ENCODE measurements at regions of chr19 and their contacts with region 1.

Region 1: DNA sequence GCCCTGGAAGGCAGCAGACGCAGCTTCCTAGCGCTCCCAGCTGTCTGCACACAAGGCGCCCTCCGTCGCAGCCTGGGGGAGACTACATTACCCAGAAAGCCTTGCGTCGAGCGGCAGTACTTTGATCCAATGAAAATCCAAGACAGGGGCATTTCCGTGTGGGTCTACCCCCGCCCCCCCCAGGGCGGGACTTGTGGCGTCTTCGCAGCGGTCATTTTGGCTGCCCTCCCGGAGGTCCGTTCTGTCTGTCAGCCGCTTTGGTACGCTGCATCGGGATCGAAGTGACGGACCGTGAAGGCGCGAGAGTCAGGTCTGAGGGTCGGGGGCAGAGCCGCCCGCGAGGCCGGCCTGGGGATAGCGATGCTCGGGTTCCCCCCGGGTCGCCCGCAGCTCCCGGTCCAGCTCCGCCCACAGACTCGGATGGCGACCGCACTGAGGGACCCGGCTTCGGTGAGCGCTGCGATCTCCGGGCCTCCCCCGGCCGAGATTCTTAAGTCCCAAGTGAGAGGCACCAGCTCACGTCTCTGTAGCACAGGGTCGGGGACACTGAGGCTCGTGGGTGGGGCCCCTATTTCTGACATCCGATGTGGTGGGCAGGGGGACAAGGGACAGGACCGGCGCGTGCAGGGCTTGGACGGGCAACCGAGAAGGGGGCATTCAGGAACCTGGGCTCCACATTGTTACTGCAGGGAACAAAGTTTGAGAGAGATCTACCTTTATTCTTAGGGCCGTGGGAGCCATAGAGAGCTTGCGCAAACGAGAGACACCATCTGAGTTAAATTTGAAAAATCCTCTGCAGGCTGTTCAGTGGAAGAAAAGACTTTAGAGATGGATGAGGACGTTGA is at the start of gene ZNF211:
- DNase-seq: peak; percentile 93
- ATAC-seq: peak; percentile 100
- H3K4me3 ChIP-seq: peak within 1 kb of the TSS; percentile 83
- H3K27ac ChIP-seq: peak within 1 kb of the TSS; percentile 78
- H3K4me1 ChIP-seq: peaks cover 4% of the 10 kb centered on the region
- H3K27me3 ChIP-seq: no peaks in the 10 kb centered on the region
- CTCF ChIP-seq: 0 out of 2 replicates have a peak, but pooled peaks have one; percentile 2
- POLR2A ChIP-seq: no peak
- RAD21 ChIP-seq: no peak
- total RNA-seq, gene ZNF211: 9.2 and 13.1 TPM in 2 replicates

Region 2: GRCh38 chr19:57578487-57579205 is 54.6 kb before region 1 on chr19 and contains the start of gene ZNF416:
- CTCF ChIA-PET with region 1: no interaction called
- POLR2A ChIA-PET with region 1: no interaction called
- dilution Hi-C with region 1: no loop called
- in situ Hi-C with region 1: no loop called
- intact Hi-C with region 1: loop called (anchors 2 kb)
- DNase-seq: peak; percentile 99
- ATAC-seq: peak; percentile 95
- H3K4me3 ChIP-seq: peak within 1 kb of the TSS; percentile 66
- H3K27ac ChIP-seq: peak within 1 kb of the TSS; percentile 21
- H3K4me1 ChIP-seq: peaks cover 2% of the 10 kb centered on the region; the same call in 1 of the 2 replicates
- H3K27me3 ChIP-seq: no peaks in the 10 kb centered on the region
- CTCF ChIP-seq: peak; percentile 39
- POLR2A ChIP-seq: no peak
- RAD21 ChIP-seq: no peak
- total RNA-seq, gene ZNF416: 6.1 and 8.1 TPM in 2 replicates

Region 3: GRCh38 chr19:57671114-57671878 is 38.1 kb after region 1 on chr19:
- CTCF ChIA-PET with region 1: no interaction called
- POLR2A ChIA-PET with region 1: no interaction called
- dilution Hi-C with region 1: no loop called
- in situ Hi-C with region 1: no loop called
- intact Hi-C with region 1: no loop called
- DNase-seq: no peak
- ATAC-seq: no peak
- H3K4me3 ChIP-seq: no peak overlapping the region
- H3K27ac ChIP-seq: no peak overlapping the region
- H3K4me1 ChIP-seq: no peaks in the 10 kb centered on the region
- H3K27me3 ChIP-seq: no peaks in the 10 kb centered on the region; the same call in 1 of the 2 replicates
- CTCF ChIP-seq: no peak
- POLR2A ChIP-seq: no peak
- RAD21 ChIP-seq: no peak

Region 4: DNA sequence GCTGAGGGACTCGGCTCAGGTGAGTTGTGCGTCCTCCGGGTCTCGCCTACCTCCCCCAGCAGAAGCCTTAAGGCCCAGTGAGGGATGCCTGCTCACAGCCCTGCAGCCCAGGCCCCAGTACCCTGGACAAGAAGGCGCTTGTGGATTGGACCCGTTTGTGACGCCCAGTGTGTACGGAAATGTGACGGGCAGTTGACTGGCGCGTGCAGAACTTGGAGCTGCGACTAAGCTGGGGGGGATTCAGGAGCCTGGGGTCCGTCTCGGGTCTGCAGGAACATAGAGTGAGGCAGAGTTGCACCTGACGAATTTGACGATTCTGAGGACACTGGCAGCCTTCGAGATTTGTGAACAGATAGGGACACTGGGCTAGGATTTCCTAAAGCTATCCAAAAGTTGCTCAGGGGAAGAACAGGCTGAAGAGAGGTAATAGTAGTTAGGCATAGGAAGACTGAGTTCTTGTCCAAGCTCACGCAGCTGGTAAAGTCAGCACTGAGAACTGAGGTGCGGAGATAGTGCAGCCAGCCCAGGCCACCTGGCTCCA is 49.1 kb after region 1 on chr19:
- CTCF ChIA-PET with region 1: no interaction called
- POLR2A ChIA-PET with region 1: no interaction called
- dilution Hi-C with region 1: no loop called
- in situ Hi-C with region 1: no loop called
- intact Hi-C with region 1: loop called (anchors 5 kb)
- DNase-seq: no peak
- ATAC-seq: no peak; the same call in 1 of the 2 replicates
- H3K4me3 ChIP-seq: peak overlapping the region; percentile 60
- H3K27ac ChIP-seq: peak overlapping the region; percentile 17; the same call in 1 of the 2 replicates
- H3K4me1 ChIP-seq: peaks cover 3% of the 10 kb centered on the region
- H3K27me3 ChIP-seq: no peaks in the 10 kb centered on the region
- CTCF ChIP-seq: no peak
- POLR2A ChIP-seq: no peak
- RAD21 ChIP-seq: no peak

Measured in IMR-90 (cell line).